ENCODE measurements at regions of chr22 and their contacts with region 1.

Region 1: DNA sequence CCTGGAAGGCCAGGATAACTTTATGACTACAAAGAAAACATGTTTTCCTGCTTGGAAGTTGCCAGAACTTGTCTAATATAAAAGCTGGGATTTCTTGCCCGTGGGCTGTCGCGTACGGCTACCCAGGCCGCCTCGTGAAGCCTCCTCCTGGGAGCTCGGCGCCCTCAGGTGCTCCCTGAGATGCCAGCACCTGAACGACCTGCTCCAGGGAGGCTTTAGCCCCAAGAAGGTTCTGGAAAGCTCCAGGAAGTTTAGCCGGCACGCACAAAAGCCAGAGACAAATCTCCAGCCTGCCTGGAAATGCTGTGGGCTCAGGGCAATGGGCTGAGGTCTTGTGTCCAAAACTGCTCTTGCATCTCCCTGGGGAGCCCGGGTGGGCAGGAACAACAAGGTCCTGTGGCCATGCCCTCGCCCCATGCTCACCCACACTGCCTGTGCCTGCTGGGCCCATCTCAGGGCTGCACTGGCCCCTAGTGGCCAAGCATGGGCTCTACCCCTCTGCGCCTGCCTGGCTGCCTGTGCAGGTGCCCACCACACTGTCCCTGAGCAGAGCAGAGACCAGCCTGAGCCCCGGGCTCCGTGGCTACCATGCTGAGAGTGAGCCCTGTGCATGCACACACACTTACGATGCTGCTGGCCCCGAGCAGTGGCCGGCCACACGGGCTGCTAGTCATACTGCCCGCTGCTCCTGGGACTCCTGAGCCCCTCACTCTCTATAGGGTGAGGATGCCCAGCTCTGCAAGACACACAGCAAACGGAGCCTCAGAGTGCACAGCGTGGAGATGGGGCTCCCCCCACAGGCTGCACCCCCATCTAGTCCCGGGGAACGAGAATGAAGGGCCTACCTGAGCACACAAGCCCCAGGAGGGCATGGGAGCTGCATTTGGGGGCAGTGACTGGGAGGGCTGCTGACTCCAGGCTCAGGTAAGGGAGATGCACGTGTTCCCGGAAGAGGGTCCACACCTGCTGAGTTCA is 4.9 kb upstream of the CELSR1 start:
- DNase-seq: peak; percentile 83 to 88
- ATAC-seq: peak; percentile 90
- H3K4me3 ChIP-seq: no peak overlapping the region
- H3K27ac ChIP-seq: no peak overlapping the region
- H3K4me1 ChIP-seq: no peaks in the 10 kb centered on the region
- H3K27me3 ChIP-seq: no peaks in the 10 kb centered on the region

Region 2: DNA sequence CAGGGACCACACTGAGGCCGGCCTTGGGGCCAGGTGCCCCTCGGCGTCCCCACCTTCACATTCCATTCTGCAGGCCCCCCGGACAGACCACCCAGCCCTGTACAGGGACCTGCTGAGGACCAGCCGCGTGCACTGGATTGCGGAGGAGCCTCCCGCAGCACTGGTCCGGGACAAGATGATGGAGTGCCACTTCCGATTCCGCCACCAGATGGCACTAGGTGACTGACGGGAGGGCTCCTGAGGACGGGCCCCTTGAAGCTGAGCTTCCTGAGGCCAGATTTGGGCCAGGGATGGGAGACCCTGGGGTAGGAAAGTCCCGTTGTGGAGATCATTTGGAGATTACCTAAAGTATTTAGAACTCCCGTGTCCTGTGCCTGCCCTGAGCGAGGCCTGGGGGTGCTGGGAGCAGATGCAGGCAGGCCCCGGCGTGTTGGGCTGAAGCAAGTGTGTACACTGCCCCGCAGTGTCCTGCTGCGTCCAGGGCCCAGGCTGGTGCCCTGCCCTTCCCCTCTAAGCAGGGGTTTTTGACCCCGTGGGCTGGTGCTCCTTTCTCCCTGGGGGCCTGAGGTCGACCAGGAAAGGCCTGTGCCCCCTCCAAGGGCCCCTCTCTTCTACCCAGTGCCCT is 186.8 kb before region 1 on chr22:
- intact Hi-C with region 1: loop called in 1 of 2 experiments (anchors 10 kb)
- DNase-seq: peak; percentile 65 to 86
- ATAC-seq: no peak
- H3K4me3 ChIP-seq: no peak overlapping the region
- H3K27ac ChIP-seq: no peak overlapping the region
- H3K4me1 ChIP-seq: no peaks in the 10 kb centered on the region
- H3K27me3 ChIP-seq: no peaks in the 10 kb centered on the region

Region 3: GRCh38 chr22:46367707-46368191 is 174.5 kb before region 1 on chr22:
- intact Hi-C with region 1: loop called in 1 of 2 experiments (anchors 2 kb)
- DNase-seq: peak; percentile 70 to 86
- ATAC-seq: peak; percentile 40
- H3K4me3 ChIP-seq: no peak overlapping the region
- H3K27ac ChIP-seq: no peak overlapping the region
- H3K4me1 ChIP-seq: no peaks in the 10 kb centered on the region
- H3K27me3 ChIP-seq: no peaks in the 10 kb centered on the region

Measured in aorta (tissue), 5 donors.